A673 (cell line): ENCODE measurements at regions of chr3 and their contacts with region 1.

Region 1: GRCh38 chr3:120742198-120742849 is at the starts of genes GTF2E1 and RABL3:
- DNase-seq: peak; percentile 100
- H3K4me3 ChIP-seq: peak within 1 kb of the TSS; percentile 92
- H3K27ac ChIP-seq: peak within 1 kb of the TSS; percentile 97
- H3K4me1 ChIP-seq: peaks cover 12% of the 10 kb centered on the region
- H3K27me3 ChIP-seq: no peaks in the 10 kb centered on the region
- CTCF ChIP-seq: no peak
- total RNA-seq, gene GTF2E1: 21.7 and 24.3 TPM in 2 replicates
- total RNA-seq, gene RABL3: 16.5 and 18.2 TPM in 2 replicates

Region 2: GRCh38 chr3:120596116-120596852 is 146.0 kb before region 1 on chr3 and contains the start of gene NDUFB4:
- CTCF ChIA-PET with region 1: no interaction called
- POLR2A ChIA-PET with region 1: no interaction called
- intact Hi-C with region 1: loop called (anchors 5 kb)
- DNase-seq: peak; percentile 99
- H3K4me3 ChIP-seq: peak within 1 kb of the TSS; percentile 79
- H3K27ac ChIP-seq: peak within 1 kb of the TSS; percentile 93
- H3K4me1 ChIP-seq: peaks cover 9% of the 10 kb centered on the region
- H3K27me3 ChIP-seq: peaks cover 5% of the 10 kb centered on the region
- CTCF ChIP-seq: no peak
- total RNA-seq, gene NDUFB4: 177 and 200 TPM in 2 replicates

Region 3: GRCh38 chr3:120678331-120678947 is 63.9 kb before region 1 on chr3:
- CTCF ChIA-PET with region 1: no interaction called
- POLR2A ChIA-PET with region 1: no interaction called
- intact Hi-C with region 1: loop called (anchors 5 kb)
- DNase-seq: peak; percentile 60
- H3K4me3 ChIP-seq: no peak overlapping the region
- H3K27ac ChIP-seq: no peak overlapping the region
- H3K4me1 ChIP-seq: peaks cover 21% of the 10 kb centered on the region
- H3K27me3 ChIP-seq: no peaks in the 10 kb centered on the region
- CTCF ChIP-seq: no peak